GM10248 (cell line): ENCODE measurements at regions of chr11 and their contacts with region 1.

Region 1: GRCh38 chr11:72585762-72586311 is 88.4 kb downstream of the PDE2A start:
- DNase-seq: peak; percentile 85
- CTCF ChIP-seq: peak; percentile 82

Region 2: GRCh38 chr11:72573072-72573854 is 12.6 kb before region 1 on chr11:
- CTCF ChIA-PET with region 1: interaction called, 14 read pairs
- POLR2A ChIA-PET with region 1: no interaction called
- DNase-seq: peak; percentile 70
- CTCF ChIP-seq: peak; percentile 62

Region 3: GRCh38 chr11:72598906-72599305 is 13.1 kb after region 1 on chr11:
- CTCF ChIA-PET with region 1: interaction called, 21 read pairs
- POLR2A ChIA-PET with region 1: no interaction called
- DNase-seq: no peak
- CTCF ChIP-seq: peak; percentile 2

Region 4: DNA sequence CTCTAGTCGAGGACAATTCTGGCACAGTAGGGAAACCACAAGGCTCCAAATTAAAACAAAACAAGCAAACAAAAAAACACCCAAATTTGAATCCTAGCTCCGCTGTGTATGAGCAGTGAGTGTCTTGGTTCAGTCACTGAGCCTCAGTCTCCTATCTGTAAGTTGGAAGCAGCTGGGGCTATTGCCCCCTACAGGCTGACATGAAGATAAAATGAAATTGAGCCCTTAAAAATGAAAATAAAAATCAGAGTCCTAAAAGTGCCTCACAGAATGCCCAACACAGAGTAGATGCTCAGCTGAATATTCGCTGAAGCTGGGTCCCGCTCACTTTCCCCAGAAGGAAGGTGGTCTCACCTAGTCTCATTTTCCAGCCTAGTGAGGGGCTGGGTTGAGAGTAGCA is 23.2 kb after region 1 on chr11:
- CTCF ChIA-PET with region 1: interaction called, 10 read pairs
- POLR2A ChIA-PET with region 1: no interaction called
- DNase-seq: peak; percentile 45
- CTCF ChIP-seq: peak; percentile 42

Region 5: DNA sequence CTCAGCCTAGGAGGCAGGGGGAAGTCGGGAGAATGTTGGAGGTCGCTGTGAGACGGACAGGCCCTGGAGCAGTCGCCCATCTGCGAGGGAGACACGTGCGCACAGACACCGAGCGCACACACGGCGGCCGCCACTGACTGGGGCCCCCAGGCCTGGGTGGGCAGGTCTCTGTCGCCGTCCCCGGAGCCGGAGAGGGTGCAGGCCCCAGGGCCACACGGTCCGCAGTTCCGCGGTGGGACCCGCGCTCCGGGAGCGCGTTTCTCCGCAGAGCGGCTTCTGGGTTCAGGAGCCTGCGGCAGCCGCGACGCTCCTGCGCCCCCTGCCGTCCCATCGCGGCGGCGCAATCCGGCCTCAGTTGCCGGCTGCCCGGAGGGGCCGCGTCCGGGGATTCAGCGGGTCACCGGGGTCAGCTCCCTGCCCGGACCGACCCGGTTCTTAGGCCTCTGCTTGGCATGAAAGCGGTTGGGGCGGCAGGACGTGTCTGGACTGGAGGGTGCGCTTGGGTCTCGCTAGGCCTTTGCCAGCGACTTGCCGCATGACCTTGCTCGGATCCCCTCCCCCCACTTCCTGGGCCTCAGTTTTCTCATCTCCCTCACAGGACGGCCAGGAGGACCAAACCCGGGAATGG is 57.2 kb after region 1 on chr11:
- CTCF ChIA-PET with region 1: interaction called, 154 read pairs
- POLR2A ChIA-PET with region 1: no interaction called
- DNase-seq: peak; percentile 90
- CTCF ChIP-seq: peak; percentile 83

Region 6: GRCh38 chr11:72693271-72693968 is 107.6 kb after region 1 on chr11:
- CTCF ChIA-PET with region 1: no interaction called
- POLR2A ChIA-PET with region 1: no interaction called
- DNase-seq: no peak
- CTCF ChIP-seq: no peak